B cell (primary cell): ENCODE measurements at regions of chrX and their contacts with region 1.

Region 1: DNA sequence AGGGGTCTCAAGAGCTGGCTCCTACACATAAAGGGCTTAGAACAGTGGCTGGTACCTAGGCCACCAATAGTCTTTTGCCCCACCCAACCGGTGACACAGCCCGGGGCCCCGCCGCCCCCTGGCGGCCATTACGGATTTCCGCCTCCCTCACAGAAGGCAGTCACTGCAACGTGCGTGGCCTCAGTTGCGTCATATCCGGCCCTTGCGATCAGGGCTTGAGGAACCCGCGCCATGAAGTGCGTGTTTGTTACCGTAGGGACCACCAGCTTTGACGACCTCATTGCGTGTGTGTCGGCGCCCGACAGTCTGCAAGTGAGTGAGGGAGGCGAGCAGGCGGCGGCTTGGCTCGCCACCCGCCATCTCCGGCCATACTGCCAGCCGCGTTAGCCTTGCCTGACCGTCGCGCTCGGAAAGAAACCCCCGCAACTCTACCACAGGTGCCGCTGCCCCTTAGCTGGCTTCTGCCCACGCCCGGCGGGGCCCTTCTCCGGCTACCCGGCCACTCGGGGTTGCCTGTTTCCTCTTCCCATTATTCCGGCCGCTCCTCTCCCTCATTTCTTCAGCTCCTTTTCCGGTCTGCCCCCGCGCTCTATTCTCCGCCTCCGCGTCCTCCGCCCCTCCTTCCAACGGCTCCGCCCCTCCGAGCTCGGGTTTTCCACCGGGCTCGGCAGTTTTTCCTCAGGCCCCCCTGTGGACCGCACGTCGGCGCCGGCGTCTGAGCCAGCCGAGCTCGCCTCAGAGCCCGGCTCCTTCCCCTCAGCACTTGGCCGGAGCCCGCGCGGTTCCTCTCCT is at the start of gene ALG13:
- DNase-seq: peak; percentile 94
- ATAC-seq: peak; percentile 86
- H3K4me3 ChIP-seq: peak within 1 kb of the TSS; percentile 47 to 97 (median 86)
- H3K4me3 Mint-ChIP-seq: peak within 1 kb of the TSS; percentile 92
- H3K27ac ChIP-seq: peak within 1 kb of the TSS; percentile 98 to 100
- H3K27ac Mint-ChIP-seq: peak within 1 kb of the TSS; percentile 97
- H3K4me1 ChIP-seq: peaks cover 8 to 14% of the 10 kb centered on the region in 2 donors
- H3K4me1 Mint-ChIP-seq: peaks cover 25% of the 10 kb centered on the region
- H3K27me3 ChIP-seq: no peaks in the 10 kb centered on the region
- H3K27me3 Mint-ChIP-seq: no peaks in the 10 kb centered on the region
- CTCF ChIP-seq: peak; percentile 66
- total RNA-seq, gene ALG13: 134 and 138 TPM in 2 replicates

Region 2: GRCh38 chrX:111098874-111099273 is 582.3 kb before region 1 on chrX:
- CTCF ChIA-PET with region 1: no interaction called
- POLR2A ChIA-PET with region 1: no interaction called
- intact Hi-C with region 1: loop called (anchors 5 kb)
- DNase-seq: peak; percentile 51
- ATAC-seq: peak; percentile 41
- H3K4me3 ChIP-seq: peak overlapping the region in 1 of 5 experiments; percentile 19
- H3K4me3 Mint-ChIP-seq: peak overlapping the region; percentile 59
- H3K27ac ChIP-seq: no peak overlapping the region
- H3K27ac Mint-ChIP-seq: no peak overlapping the region
- H3K4me1 ChIP-seq: peaks cover 11 to 17% of the 10 kb centered on the region in 2 donors
- H3K4me1 Mint-ChIP-seq: peaks cover 17% of the 10 kb centered on the region
- H3K27me3 ChIP-seq: peaks cover 0 to 19% (median 4%) of the 10 kb centered on the region in 4 experiments
- H3K27me3 Mint-ChIP-seq: peaks cover 17% of the 10 kb centered on the region
- CTCF ChIP-seq: peak; percentile 49